ENCODE measurements at regions of chr13 and their contacts with region 1.

Region 1: DNA sequence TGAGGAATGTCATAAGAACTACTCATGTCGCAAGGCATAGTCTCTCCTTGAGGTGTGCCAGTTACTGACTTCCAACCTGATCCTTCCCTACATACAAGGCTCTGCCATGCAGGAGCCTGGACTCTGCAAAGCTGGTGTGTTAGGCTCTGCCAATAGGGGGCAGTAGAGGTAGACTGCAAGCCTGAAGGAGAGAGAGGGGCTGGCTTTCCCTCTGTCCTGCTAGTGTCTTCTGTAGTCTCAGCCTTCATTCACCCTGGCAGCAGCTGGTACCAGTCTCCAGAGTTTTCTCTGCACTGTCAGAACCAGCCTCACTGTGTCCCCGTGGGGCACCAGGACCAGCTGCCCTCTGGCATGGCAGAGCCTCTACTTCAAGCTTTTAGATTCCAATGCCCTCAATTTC is 14.5 kb downstream of the SHISA2 start:
- DNase-seq: peak; percentile 69 to 90
- H3K4me3 ChIP-seq: no peak overlapping the region
- H3K27ac ChIP-seq: no peak overlapping the region
- H3K4me1 ChIP-seq: peaks cover 0 to 6% (median 2%) of the 10 kb centered on the region in 4 experiments; a peak in 1 of 7 replicates
- H3K27me3 ChIP-seq: no peaks in the 10 kb centered on the region; a peak in 1 of 7 replicates
- CTCF ChIP-seq: peak; percentile 87 to 99 (median 90)
- EP300 ChIP-seq: no peak
- POLR2A ChIP-seq: no peak
- RAD21 ChIP-seq: peak; percentile 66 to 87

Region 2: DNA sequence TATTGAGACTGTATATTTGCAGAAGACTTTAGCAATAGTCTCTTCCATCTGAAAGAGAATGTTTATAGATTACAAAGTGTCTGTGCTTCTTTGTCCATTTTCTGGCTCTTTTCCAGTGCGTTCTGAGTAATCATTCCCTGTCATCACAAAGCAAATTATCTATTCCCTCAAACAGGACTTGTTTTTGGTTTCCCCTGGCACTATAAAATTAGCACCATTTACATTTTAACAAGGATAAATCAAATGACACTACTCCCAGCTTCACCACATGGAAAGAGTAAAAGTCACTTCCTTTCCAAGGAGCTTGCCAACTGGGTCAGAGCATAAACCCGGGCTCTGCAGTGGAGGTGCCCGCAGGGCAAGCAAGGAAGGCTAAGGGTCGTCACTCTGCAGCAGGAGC is 73.6 kb before region 1 on chr13:
- CTCF ChIA-PET with region 1: no interaction called
- POLR2A ChIA-PET with region 1: no interaction called
- DNase-seq: no peak
- H3K4me3 ChIP-seq: no peak overlapping the region
- H3K27ac ChIP-seq: no peak overlapping the region
- H3K4me1 ChIP-seq: peaks cover 0 to 5% (median 0%) of the 10 kb centered on the region in 4 experiments; a peak in 1 of 7 replicates
- H3K27me3 ChIP-seq: peaks cover 0 to 4% (median under 1%) of the 10 kb centered on the region in 4 experiments; a peak in 3 of 7 replicates
- CTCF ChIP-seq: no peak
- EP300 ChIP-seq: no peak
- POLR2A ChIP-seq: no peak
- RAD21 ChIP-seq: no peak

Region 3: DNA sequence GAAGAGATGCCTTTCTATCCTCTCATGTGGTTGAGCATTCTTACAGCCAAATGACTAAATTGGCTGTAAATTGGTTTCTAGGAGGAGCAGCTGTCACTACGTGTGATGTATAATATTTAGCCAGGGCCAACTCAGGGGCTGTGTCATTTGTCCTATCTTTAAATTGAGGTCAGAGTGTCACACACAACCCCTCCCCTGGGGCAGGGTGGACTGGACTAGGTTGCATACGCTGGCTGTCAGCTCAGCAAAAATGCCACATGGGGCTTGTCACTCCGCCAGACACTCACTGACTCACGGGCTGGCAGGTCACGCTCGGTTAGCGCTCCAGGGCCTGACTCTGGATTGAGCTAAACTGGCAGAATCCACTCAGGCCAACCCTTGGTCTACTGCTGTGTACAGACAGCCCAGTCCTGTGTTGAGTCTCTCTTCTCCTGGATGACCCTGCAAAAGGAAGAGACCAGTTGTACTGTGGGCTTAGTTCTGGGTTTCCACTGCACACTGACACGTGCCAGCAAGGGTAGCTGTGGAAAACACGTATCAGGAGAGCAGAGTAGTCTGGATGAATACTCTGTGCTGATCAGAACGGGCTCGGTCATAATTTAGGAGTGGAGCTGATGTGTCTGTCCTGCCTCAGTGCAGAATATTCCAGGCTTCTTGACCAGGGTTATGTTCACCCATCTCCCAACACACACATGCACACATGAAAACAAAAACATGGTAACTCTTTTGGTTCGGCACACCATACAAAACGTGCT is 14.6 kb before region 1 on chr13:
- CTCF ChIA-PET with region 1: interaction called, 53 read pairs
- POLR2A ChIA-PET with region 1: no interaction called
- DNase-seq: peak in 1 of 2 experiments; percentile 39
- H3K4me3 ChIP-seq: no peak overlapping the region
- H3K27ac ChIP-seq: no peak overlapping the region
- H3K4me1 ChIP-seq: peaks cover 0 to 14% (median 4%) of the 10 kb centered on the region in 4 experiments; a peak in 5 of 7 replicates
- H3K27me3 ChIP-seq: no peaks in the 10 kb centered on the region; a peak in 1 of 7 replicates
- CTCF ChIP-seq: no peak
- EP300 ChIP-seq: no peak
- POLR2A ChIP-seq: no peak
- RAD21 ChIP-seq: no peak

Region 4: GRCh38 chr13:26050568-26051230 is 13.4 kb after region 1 on chr13:
- CTCF ChIA-PET with region 1: interaction called, 16 read pairs
- POLR2A ChIA-PET with region 1: interaction called, 10 read pairs
- DNase-seq: peak in 1 of 2 experiments; percentile 80
- H3K4me3 ChIP-seq: peak overlapping the region; percentile 32 to 68 (median 55)
- H3K27ac ChIP-seq: no peak overlapping the region
- H3K4me1 ChIP-seq: peaks cover 2 to 3% (median 2%) of the 10 kb centered on the region in 4 experiments; a peak in 4 of 7 replicates
- H3K27me3 ChIP-seq: peaks cover 9 to 45% (median 23%) of the 10 kb centered on the region in 4 experiments
- CTCF ChIP-seq: peak in 1 of 3 experiments; percentile 13; a peak in 1 of 4 replicates
- EP300 ChIP-seq: no peak
- POLR2A ChIP-seq: no peak; a peak in 1 of 3 replicates
- RAD21 ChIP-seq: peak in 1 of 2 experiments; percentile 6; a peak in 2 of 4 replicates

Region 5: GRCh38 chr13:26095338-26095737 is 58.0 kb after region 1 on chr13:
- CTCF ChIA-PET with region 1: no interaction called
- POLR2A ChIA-PET with region 1: no interaction called
- DNase-seq: no peak
- H3K4me3 ChIP-seq: no peak overlapping the region
- H3K27ac ChIP-seq: no peak overlapping the region
- H3K4me1 ChIP-seq: peaks cover 0 to 2% (median 0%) of the 10 kb centered on the region in 4 experiments; a peak in 3 of 7 replicates
- H3K27me3 ChIP-seq: peaks cover 0 to 1% (median 0%) of the 10 kb centered on the region in 4 experiments; a peak in 2 of 7 replicates
- CTCF ChIP-seq: peak in 1 of 3 experiments; percentile 33; a peak in 1 of 4 replicates
- EP300 ChIP-seq: no peak
- POLR2A ChIP-seq: no peak
- RAD21 ChIP-seq: no peak